Activated CD4-positive, alpha-beta T cell treated with anti-CD3 and anti-CD28 coated beads for 36 hours (primary cell): ENCODE measurements at regions of chr2 and their contacts with region 1.

Region 1: DNA sequence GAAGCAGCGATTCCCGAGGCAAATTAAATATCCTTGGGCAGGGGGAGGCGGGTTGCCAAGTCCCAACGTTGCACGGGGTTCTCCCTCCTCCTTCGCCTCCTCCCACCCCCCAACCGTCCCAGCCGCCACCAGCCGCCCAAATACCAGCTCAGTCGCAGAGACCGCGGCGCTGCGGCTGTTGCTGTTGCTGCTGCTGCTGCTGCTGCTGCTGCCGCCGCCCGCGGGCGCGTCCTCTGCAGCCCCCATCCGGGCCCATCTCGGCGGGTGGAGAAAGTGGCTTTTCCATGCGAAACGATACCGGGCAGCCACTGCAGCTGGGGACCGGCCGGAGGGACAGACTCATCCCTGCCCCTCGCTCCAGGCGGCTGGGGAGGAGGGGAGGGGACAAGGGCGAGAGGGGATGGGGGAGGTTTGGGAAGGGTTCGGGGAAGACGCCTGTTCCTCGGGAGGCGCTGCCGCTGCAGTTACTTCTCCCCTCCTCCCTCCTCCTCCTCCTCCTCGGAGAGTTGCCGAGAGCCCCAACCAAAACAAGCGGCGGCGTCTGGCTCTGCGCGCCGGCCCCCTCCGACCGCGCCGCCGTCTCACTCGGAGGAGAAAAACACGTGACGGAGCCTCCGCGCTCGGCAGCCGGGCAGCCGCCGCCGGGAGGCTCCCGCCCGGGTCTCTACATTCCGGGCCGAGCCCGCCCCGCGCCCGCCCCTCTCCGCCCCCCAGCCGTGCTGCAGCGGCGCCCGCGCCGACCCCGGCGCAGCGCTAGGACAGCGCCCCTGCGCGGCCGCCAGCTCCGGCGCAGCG is at the start of gene IRS1:
- DNase-seq: peak; percentile 82
- ATAC-seq: peak; percentile 63
- H3K4me3 Mint-ChIP-seq: peak within 1 kb of the TSS; percentile 75
- H3K27ac Mint-ChIP-seq: peak within 1 kb of the TSS; percentile 70
- H3K4me1 Mint-ChIP-seq: peaks cover 25% of the 10 kb centered on the region
- H3K27me3 Mint-ChIP-seq: peaks cover 6% of the 10 kb centered on the region
- total RNA-seq, gene IRS1: 2.6 to 3.3 TPM

Region 2: GRCh38 chr2:225668606-225669266 is 1130.6 kb before region 1 on chr2:
- CTCF ChIA-PET with region 1: interaction called, 8 read pairs
- POLR2A ChIA-PET with region 1: no interaction called
- intact Hi-C with region 1: loop called (anchors 1 kb)
- DNase-seq: peak; percentile 14
- ATAC-seq: peak; percentile 79
- H3K4me3 Mint-ChIP-seq: no peak overlapping the region
- H3K27ac Mint-ChIP-seq: no peak overlapping the region
- H3K4me1 Mint-ChIP-seq: no peaks in the 10 kb centered on the region
- H3K27me3 Mint-ChIP-seq: peaks cover 10% of the 10 kb centered on the region

Region 3: GRCh38 chr2:226030788-226031646 is 768.4 kb before region 1 on chr2:
- CTCF ChIA-PET with region 1: interaction called, 4 read pairs
- POLR2A ChIA-PET with region 1: no interaction called
- intact Hi-C with region 1: loop called (anchors 5 to 10 kb)
- DNase-seq: peak; percentile 49
- ATAC-seq: peak; percentile 66
- H3K4me3 Mint-ChIP-seq: peak overlapping the region; percentile 64
- H3K27ac Mint-ChIP-seq: peak overlapping the region; percentile 39
- H3K4me1 Mint-ChIP-seq: peaks cover 29% of the 10 kb centered on the region
- H3K27me3 Mint-ChIP-seq: peaks cover 49% of the 10 kb centered on the region

Region 4: DNA sequence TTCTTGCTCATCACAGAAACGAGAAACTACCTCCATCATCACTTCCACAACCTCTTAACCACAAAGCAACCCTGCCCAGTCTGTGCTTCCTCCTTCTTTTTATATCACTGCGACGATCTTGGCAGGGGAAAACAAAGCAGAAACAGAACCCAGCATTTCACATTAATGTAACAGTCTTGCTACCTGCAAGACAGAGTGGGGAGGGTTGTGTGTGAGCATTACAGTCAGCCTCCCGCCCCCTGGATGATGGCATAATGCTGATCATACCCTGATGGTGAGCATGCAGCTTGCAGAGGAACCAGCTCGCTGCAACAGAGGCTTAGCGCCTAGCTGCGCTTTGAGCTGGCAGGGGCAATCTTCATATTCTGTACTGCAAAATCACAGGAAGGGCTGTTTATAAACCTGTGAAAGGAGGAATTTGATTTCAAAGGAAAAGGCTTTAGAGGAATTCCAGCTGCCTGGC is 375.8 kb before region 1 on chr2:
- CTCF ChIA-PET with region 1: no interaction called
- POLR2A ChIA-PET with region 1: no interaction called
- intact Hi-C with region 1: loop called (anchors 2 to 10 kb)
- DNase-seq: peak; percentile 69
- ATAC-seq: peak; percentile 94
- H3K4me3 Mint-ChIP-seq: no peak overlapping the region
- H3K27ac Mint-ChIP-seq: no peak overlapping the region
- H3K4me1 Mint-ChIP-seq: peaks cover 12% of the 10 kb centered on the region
- H3K27me3 Mint-ChIP-seq: peaks cover 14% of the 10 kb centered on the region

Region 5: DNA sequence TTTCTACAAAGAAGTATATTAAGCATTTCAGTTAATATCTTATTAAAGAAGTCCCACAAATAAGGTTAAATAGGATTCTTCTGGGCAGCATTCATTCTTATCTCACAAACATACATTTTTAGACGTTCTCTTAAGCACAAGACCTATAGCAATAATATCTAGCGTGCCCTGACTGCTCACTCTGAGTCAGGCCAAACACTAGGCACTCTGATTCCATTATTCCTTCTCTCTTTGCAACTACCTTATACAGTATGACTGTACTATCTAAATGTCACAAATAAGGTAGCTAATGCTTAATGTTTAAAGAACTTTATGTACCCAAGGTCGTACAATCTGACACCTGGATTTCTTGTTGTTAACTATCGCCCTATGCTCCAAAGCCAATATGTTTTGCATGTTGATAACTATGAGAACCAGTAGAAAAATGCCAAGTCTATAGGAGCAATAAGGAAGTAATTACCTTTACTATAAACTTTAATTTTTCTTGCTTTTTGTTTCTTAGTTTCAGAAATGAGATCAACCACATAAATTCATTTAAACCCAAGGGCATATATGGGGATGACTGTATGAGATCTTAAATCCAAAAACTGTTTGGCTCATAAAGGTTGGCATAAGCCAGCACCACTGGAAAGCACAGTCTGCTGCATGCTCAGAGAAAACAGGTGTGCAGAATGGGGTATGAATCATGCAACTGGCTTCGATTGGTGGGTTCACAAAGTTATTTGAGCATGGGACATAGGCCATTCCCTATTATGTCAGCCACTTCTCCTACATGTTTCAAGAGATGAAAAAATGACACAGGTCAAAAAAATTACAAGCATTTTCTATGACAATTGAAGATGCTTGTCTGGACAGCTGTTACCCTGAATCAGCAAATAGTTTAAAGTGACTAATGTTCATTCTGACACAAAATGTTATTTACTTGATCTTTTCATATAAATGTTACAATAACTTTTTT is 351.8 kb before region 1 on chr2:
- CTCF ChIA-PET with region 1: no interaction called
- POLR2A ChIA-PET with region 1: no interaction called
- intact Hi-C with region 1: no loop called
- DNase-seq: no peak
- ATAC-seq: no peak
- H3K4me3 Mint-ChIP-seq: no peak overlapping the region
- H3K27ac Mint-ChIP-seq: no peak overlapping the region
- H3K4me1 Mint-ChIP-seq: no peaks in the 10 kb centered on the region
- H3K27me3 Mint-ChIP-seq: peaks cover 15% of the 10 kb centered on the region

Region 6: DNA sequence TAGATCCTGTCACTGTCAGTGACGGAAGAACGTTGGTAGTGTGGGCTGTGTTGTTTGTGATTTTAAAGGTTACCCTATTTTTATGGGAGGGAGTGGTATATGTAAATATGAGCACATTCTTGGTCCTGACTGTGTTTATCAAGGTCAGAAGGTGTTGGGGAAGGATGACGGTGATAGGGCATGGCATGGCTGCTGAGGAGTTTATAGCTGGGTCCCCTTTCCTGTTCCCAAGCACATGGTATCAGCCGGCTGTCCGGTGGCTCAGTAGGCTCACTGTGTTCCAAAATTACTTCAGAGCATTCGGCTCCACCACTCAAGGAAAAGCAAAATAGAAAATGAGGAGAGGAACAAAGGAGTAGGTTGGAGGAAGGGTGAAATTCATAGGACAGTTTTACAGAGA is 28.3 kb before region 1 on chr2:
- CTCF ChIA-PET with region 1: no interaction called
- POLR2A ChIA-PET with region 1: no interaction called
- intact Hi-C with region 1: no loop called
- DNase-seq: no peak
- ATAC-seq: no peak
- H3K4me3 Mint-ChIP-seq: no peak overlapping the region
- H3K27ac Mint-ChIP-seq: peak overlapping the region; percentile 13
- H3K4me1 Mint-ChIP-seq: peaks cover 24% of the 10 kb centered on the region
- H3K27me3 Mint-ChIP-seq: no peaks in the 10 kb centered on the region

Region 7: GRCh38 chr2:226813148-226813701 is 13.8 kb after region 1 on chr2:
- CTCF ChIA-PET with region 1: interaction called, 15 read pairs
- POLR2A ChIA-PET with region 1: no interaction called
- intact Hi-C with region 1: no loop called
- DNase-seq: peak; percentile 17
- ATAC-seq: no peak
- H3K4me3 Mint-ChIP-seq: no peak overlapping the region
- H3K27ac Mint-ChIP-seq: no peak overlapping the region
- H3K4me1 Mint-ChIP-seq: no peaks in the 10 kb centered on the region
- H3K27me3 Mint-ChIP-seq: peaks cover 23% of the 10 kb centered on the region

Region 8: DNA sequence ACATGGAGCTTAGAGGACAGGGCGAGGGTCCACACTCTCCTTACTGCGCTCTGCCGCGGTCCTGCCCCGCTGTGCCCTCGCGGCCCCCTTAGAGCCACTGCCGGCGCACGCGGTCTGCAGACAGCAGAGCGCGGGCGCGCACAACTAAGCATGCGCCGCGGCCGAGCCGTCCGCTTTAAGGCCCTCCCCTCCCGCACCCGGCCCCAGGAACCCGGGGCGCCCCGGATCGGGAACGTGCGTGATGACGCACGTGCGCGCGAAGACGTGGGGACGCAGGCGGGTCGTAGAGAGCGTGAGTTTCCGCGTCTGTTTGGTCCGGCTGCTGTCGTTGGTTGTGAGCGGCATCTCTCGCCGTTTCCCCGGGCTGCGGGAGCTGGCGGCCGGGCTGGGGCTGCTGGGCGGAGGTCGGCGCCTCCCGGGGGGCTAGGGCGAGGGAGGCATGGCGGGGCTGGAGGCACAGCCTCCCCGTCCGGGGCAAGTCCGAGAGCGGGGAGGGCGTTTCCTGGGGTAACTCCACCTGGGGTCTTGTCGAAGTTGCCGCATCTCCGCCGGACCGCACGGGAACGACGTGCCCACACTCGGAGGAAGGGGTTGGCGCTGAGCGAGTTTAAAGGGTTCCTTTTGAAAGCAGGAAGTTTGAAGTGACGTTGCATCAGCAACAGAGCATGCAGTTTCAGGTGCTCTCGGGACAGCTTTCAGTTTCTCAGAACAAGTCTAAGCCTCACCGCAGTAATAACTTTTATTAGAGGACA is 36.6 kb after region 1 on chr2 and contains the start of gene RHBDD1:
- CTCF ChIA-PET with region 1: interaction called, 6 read pairs
- POLR2A ChIA-PET with region 1: interaction called, 12 read pairs
- intact Hi-C with region 1: loop called (anchors 1 to 2 kb)
- DNase-seq: peak; percentile 97
- ATAC-seq: peak; percentile 87
- H3K4me3 Mint-ChIP-seq: peak within 1 kb of the TSS; percentile 88
- H3K27ac Mint-ChIP-seq: peak within 1 kb of the TSS; percentile 95
- H3K4me1 Mint-ChIP-seq: peaks cover 54% of the 10 kb centered on the region
- H3K27me3 Mint-ChIP-seq: no peaks in the 10 kb centered on the region
- total RNA-seq, gene RHBDD1: 38.1 to 49.0 TPM

Region 9: DNA sequence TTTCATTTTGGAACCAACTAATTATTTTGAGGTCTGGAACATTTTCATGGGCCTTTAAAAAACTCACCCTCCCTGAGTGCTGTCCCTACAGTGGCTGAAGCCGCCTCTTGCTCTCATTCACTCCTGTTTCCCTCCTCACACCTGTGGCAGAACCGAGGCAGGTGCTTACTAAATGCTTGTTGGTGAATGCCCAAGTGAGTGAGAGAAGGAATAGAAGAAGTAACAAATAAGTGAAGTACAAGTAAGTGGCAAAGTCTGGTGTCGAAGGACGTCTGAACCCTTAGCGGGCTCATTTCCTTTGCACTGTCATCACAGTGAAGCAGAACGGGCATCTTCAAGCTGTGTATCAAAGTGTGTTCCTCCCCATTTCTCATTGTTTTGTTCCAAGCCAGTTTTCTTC is 171.7 kb after region 1 on chr2:
- CTCF ChIA-PET with region 1: no interaction called
- POLR2A ChIA-PET with region 1: no interaction called
- intact Hi-C with region 1: no loop called
- DNase-seq: no peak
- ATAC-seq: peak; percentile 36
- H3K4me3 Mint-ChIP-seq: no peak overlapping the region
- H3K27ac Mint-ChIP-seq: peak overlapping the region; percentile 33
- H3K4me1 Mint-ChIP-seq: peaks cover 22% of the 10 kb centered on the region
- H3K27me3 Mint-ChIP-seq: no peaks in the 10 kb centered on the region

Region 10: DNA sequence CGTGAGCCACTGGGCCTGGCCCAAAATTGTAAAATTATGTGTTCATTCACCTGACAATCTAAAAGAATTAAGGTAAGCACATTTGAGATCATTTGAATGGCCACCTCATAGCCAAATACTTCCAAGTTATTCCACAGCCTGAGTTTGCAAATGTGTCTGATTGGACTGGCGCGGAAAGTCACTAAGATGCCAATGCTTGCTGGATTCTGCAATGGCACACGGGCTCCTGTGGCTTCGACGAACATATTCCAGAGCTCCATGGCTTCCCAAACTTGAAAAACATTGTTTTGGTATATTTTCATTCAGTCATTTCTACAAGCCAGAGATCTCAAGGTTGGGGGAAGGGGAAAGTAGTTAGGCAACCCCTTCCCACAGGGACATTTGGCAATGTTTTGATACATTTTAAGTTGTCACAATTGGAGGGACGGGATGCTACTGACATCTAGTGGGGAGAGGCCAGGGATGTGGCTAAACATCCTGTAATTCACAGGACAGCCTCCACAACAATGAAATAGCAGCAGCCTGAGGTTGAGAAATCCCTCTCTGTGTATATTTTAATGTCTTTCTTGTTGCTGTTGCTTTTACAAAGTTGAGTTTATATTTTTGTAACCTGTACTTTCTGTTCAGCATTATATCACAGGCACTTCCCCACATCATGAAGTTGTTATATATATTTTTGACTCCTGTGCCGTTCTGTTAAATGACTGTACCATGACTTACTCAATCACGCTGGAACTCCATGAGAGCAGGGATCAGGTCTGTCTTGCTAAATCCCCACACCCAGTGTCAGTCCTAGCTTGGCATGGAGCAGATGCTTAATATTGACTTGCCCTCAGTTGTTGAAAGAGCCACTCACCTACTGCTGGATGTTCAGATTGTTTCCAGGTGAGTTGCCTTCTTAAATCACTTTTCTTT is 307.7 kb after region 1 on chr2:
- CTCF ChIA-PET with region 1: interaction called, 3 read pairs
- POLR2A ChIA-PET with region 1: no interaction called
- intact Hi-C with region 1: loop called (anchors 5 to 10 kb)
- DNase-seq: peak; percentile 65
- ATAC-seq: no peak
- H3K4me3 Mint-ChIP-seq: no peak overlapping the region
- H3K27ac Mint-ChIP-seq: no peak overlapping the region
- H3K4me1 Mint-ChIP-seq: no peaks in the 10 kb centered on the region
- H3K27me3 Mint-ChIP-seq: peaks cover 2% of the 10 kb centered on the region